Heart left ventricle (tissue), 16 donors: ENCODE measurements at regions of chr12 and their contacts with region 1.

Region 1: GRCh38 chr12:113422030-113422885 is at the start of gene SDSL:
- DNase-seq: peak; percentile 60 to 75 (median 71)
- ATAC-seq: peak; percentile 76 to 95 (median 94)
- H3K4me3 ChIP-seq: peak within 1 kb of the TSS in 11 of 12 donors; percentile 43 to 82 (median 58)
- H3K27ac ChIP-seq: peak within 1 kb of the TSS in 8 of 12 donors; percentile 58 to 93 (median 72)
- H3K4me1 ChIP-seq: peaks cover 0 to 28% (median 5%) of the 10 kb centered on the region in 12 donors
- H3K27me3 ChIP-seq: no peaks in the 10 kb centered on the region
- CTCF ChIP-seq: no peak
- POLR2A ChIP-seq: no peak
- total RNA-seq, gene SDSL: 2.6 to 21.0 (median 7.9) TPM

Region 2: DNA sequence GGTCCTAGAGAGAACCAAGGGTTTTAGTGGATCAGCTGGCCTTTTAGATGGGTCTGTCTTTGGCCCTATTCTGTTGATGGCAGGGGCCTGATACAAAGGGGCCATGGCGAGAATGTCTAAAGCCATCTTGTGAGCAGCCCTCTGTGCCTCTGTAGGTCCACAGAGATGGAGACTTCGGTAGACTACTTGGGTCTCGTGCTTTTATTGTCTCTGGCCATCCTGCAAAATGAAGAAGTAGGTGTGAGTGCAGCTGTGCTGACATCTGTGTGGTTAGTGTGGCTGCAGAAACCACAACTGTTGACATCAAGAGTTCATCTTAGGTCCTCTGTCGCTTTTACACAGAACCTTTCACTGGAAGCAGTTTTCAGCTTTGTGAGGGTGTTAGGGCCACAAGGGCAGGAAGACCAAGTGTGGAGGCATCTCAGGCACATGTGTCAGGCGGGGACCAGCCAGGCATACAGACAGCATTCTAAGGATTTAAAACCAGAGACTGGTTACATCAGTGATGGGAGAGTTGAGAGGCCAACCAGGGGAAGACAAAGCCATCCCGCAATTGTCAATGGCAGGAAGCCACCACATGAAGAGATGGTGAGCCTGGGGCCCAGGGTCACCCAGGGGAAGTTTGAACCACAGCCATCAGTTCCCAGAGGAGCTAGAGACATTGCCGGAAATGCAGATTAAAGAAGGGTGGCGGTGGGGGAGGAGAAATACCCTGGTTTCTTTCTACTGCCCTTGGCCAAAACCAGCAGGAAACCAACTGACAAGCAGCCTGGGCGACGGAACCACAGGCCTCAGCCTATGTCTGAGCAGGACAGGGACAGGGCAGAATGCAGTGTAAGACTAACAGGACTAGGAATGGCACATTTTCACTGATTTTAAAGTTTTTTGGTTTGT is 214.0 kb before region 1 on chr12:
- intact Hi-C with region 1: loop called in 1 of 10 experiments (anchors 10 kb)
- DNase-seq: peak; percentile 61 to 75 (median 70)
- ATAC-seq: peak; percentile 66 to 86 (median 80)
- H3K4me3 ChIP-seq: peak overlapping the region in 1 of 12 donors; percentile 25
- H3K27ac ChIP-seq: peak overlapping the region in 11 of 12 donors; percentile 11 to 91 (median 65)
- H3K4me1 ChIP-seq: peaks cover 0 to 69% (median 10%) of the 10 kb centered on the region in 12 donors
- H3K27me3 ChIP-seq: no peaks in the 10 kb centered on the region
- CTCF ChIP-seq: no peak
- POLR2A ChIP-seq: no peak

Region 3: DNA sequence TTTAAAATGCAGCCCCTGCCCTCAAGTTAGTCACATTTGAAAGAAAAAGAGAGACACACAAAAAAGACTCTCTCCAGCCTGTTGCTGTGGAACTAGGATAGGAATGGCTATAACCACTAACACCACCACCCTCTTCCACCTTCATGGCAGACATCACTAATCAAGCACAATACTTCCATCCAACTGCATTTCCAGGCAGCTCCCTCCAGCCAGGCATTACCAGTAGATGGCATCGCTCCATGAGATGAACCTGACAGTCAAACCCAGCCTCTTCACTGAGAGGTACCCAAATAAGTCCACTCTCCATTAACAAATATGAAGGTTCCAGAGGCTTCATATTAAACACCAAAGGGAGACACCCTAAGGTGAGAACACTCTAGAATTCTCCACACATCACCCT is 111.8 kb before region 1 on chr12:
- intact Hi-C with region 1: loop called (anchors 1 to 10 kb)
- DNase-seq: no peak
- ATAC-seq: no peak
- H3K4me3 ChIP-seq: no peak overlapping the region
- H3K27ac ChIP-seq: no peak overlapping the region
- H3K4me1 ChIP-seq: peaks cover 0 to 4% (median 0%) of the 10 kb centered on the region in 12 donors
- H3K27me3 ChIP-seq: no peaks in the 10 kb centered on the region
- CTCF ChIP-seq: no peak
- POLR2A ChIP-seq: no peak